BJ (cell line): ENCODE measurements at regions of chr7 and their contacts with region 1.

Region 1: DNA sequence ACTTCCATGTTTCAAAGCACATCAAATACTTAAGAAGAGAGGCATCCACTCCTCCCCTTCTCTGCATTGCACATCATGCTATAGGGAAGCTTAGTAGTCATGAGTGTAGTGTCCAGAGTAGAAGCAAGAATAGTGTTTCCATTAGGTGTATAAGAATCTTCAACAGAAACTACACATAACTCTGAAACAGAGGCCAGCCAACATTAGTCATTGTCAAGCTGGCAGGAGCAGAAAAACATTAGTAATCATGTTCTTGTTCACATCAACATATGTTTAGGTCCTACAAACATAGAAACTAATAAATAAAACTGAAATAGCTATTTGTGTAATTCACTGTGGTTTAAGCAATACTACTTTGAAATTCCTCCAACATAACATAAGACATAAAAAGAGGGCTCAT is 370.2 kb downstream of the PPP1R3A start:
- DNase-seq: no peak
- H3K4me3 ChIP-seq: no peak overlapping the region
- H3K27me3 ChIP-seq: no peaks in the 10 kb centered on the region
- CTCF ChIP-seq: no peak

Region 2: GRCh38 chr7:113188396-113188795 is 360.2 kb before region 1 on chr7:
- CTCF ChIA-PET with region 1: no interaction called
- POLR2A ChIA-PET with region 1: interaction called, 17 read pairs
- DNase-seq: no peak
- H3K4me3 ChIP-seq: no peak overlapping the region
- H3K27me3 ChIP-seq: no peaks in the 10 kb centered on the region
- CTCF ChIP-seq: no peak